MCF 10A (cell line): ENCODE measurements at regions of chr18 and their contacts with region 1.

Region 1: DNA sequence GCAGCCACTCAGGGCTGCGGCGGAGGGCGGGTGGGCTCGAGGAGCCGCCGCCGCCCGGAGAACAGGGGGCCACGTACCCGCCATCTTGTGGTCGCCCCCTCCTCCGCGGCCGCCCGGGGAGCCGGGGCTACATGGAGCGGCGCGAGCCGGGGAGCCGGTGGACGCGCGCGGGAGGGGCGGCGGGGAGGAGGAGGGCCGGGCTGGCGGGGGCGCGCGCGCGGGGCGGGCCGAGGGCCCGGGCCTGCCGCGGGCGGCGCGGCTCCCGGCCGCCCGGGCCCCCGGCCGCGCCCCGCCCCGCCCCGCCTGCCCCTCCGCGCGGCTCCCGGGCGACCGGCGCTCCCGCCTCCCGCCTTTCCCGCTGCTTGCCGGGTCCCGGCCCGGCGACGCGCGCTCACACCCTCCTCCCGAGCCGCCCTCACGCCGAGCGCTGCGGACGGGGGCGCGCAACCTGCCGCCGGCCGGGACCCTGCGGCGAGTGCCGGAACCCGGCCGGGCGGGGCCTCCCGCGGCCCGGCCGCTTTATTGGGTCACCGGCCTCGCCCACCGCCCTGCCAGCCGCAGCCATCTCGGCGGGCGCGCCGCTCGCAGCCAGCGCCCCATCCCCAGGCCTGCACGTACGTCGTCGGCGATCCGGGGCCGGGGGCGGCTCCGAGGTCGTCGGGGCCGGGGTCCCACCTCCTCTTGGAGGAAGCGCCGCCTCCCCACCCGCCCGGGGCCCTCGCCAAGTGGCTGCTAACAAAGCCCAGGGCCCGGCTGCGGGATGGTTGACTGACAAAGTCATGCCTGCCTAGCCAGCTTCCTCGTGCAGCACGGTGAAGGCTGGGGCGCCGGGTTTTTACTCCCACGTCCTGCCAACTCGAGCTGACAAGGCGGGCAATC is at the start of gene PPP4R1:
- DNase-seq: peak; percentile 68
- H3K4me3 Mint-ChIP-seq: peak within 1 kb of the TSS; percentile 97
- H3K27ac Mint-ChIP-seq: peak within 1 kb of the TSS; percentile 96
- H3K4me1 Mint-ChIP-seq: peaks cover 28% of the 10 kb centered on the region
- H3K27me3 Mint-ChIP-seq: no peaks in the 10 kb centered on the region
- CTCF ChIP-seq: no peak
- total RNA-seq, gene PPP4R1: 88.0 and 109 TPM in 2 replicates

Region 2: GRCh38 chr18:9494766-9495331 is 119.8 kb before region 1 on chr18:
- CTCF ChIA-PET with region 1: no interaction called
- POLR2A ChIA-PET with region 1: no interaction called
- intact Hi-C with region 1: no loop called
- DNase-seq: no peak
- H3K4me3 Mint-ChIP-seq: no peak overlapping the region
- H3K27ac Mint-ChIP-seq: no peak overlapping the region
- H3K4me1 Mint-ChIP-seq: no peaks in the 10 kb centered on the region
- H3K27me3 Mint-ChIP-seq: no peaks in the 10 kb centered on the region
- CTCF ChIP-seq: no peak

Region 3: GRCh38 chr18:9631814-9632496 is 17.3 kb after region 1 on chr18:
- CTCF ChIA-PET with region 1: no interaction called
- POLR2A ChIA-PET with region 1: interaction called, 36 read pairs
- intact Hi-C with region 1: no loop called
- DNase-seq: peak; percentile 49
- H3K4me3 Mint-ChIP-seq: no peak overlapping the region
- H3K27ac Mint-ChIP-seq: no peak overlapping the region
- H3K4me1 Mint-ChIP-seq: peaks cover 6% of the 10 kb centered on the region
- H3K27me3 Mint-ChIP-seq: no peaks in the 10 kb centered on the region
- CTCF ChIP-seq: no peak

Region 4: GRCh38 chr18:9661564-9661963 is 46.9 kb after region 1 on chr18:
- CTCF ChIA-PET with region 1: interaction called, 4 read pairs
- POLR2A ChIA-PET with region 1: interaction called, 15 read pairs
- intact Hi-C with region 1: loop called (anchors 1 kb)
- DNase-seq: peak; percentile 36
- H3K4me3 Mint-ChIP-seq: no peak overlapping the region
- H3K27ac Mint-ChIP-seq: no peak overlapping the region
- H3K4me1 Mint-ChIP-seq: peaks cover 16% of the 10 kb centered on the region
- H3K27me3 Mint-ChIP-seq: no peaks in the 10 kb centered on the region
- CTCF ChIP-seq: peak; percentile 27

Region 5: GRCh38 chr18:9683407-9684396 is 69.1 kb after region 1 on chr18:
- CTCF ChIA-PET with region 1: interaction called, 6 read pairs
- POLR2A ChIA-PET with region 1: interaction called, 15 read pairs
- intact Hi-C with region 1: no loop called
- DNase-seq: peak; percentile 84
- H3K4me3 Mint-ChIP-seq: no peak overlapping the region
- H3K27ac Mint-ChIP-seq: no peak overlapping the region
- H3K4me1 Mint-ChIP-seq: peaks cover 11% of the 10 kb centered on the region
- H3K27me3 Mint-ChIP-seq: no peaks in the 10 kb centered on the region
- CTCF ChIP-seq: peak; percentile 48

Region 6: DNA sequence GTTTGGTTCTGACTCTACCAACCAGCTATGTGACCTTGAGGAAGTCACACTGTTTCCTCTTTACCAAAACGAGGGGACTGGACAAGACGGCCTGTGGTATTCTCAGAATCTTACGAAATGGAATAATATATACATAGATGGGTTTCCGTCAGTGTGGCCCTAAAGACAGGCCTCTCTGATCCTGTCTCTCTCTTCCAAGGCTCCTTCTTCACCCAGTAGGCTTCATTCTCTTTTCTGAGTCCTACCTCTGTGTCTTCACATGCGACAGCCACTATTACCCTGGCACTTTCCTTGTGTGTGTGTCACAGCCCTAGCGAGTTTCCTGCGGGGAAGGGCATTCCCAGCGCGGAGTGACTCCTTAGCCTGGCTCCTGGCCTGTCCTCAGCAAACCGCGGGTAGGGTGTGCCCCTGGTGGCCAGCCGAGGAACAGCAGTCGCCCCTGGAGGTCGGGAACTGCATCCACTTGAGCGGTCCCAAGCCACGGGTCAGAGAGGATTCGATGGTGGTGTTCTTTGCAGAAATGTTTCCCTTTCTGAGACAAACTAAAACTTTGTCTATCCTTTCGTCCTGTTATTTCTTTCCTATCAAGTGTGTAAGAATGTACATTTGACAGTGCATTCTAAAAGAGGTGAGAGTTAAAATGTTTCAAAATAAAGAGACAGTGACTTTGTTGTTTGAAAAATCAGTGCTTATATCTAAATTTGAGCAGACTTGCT is 156.8 kb after region 1 on chr18:
- CTCF ChIA-PET with region 1: no interaction called
- POLR2A ChIA-PET with region 1: no interaction called
- intact Hi-C with region 1: loop called (anchors 2 kb)
- DNase-seq: peak; percentile 74
- H3K4me3 Mint-ChIP-seq: no peak overlapping the region
- H3K27ac Mint-ChIP-seq: no peak overlapping the region
- H3K4me1 Mint-ChIP-seq: peaks cover 6% of the 10 kb centered on the region
- H3K27me3 Mint-ChIP-seq: no peaks in the 10 kb centered on the region
- CTCF ChIP-seq: peak; percentile 96